T-cell (primary cell): ENCODE measurements at regions of chr12 and their contacts with region 1.

Region 1: DNA sequence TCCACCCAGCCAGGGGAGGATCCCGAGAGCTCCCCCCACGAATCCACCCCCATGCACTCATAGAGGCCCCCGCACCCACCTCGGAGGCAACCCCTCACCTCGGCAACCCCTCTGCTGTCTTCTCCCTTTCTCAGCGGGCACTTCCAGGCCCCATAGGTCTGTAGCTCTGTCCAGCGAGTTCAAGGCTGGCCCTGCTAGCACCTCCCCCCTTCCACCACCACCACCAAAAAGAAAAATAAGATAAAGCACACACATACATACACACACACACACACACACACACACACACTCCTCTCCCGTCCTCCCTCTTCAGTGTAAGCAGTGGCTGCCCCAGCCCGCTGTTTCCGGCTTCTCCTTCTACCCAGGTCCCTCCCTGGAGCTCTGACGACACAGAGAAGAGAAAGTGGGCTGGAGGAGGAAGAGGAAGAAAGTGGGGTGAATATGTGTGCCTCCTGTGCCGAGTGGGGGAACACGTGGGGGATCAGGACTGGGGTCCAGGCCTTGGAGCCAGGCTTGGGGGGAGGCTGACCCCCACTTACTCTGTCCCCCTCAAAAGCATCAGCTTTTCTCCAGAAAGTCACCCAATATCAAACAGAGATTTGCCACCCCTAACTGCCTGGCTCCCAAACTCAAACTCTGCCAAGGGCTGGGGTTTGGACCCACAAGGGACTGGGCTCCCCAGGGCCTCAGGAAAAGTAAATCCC is at the start of gene STAT6:
- DNase-seq: peak; percentile 55 to 93 (median 85)
- ATAC-seq: peak; percentile 71 to 76 (median 72)
- H3K4me3 ChIP-seq: peak within 1 kb of the TSS; percentile 68 to 97
- H3K4me3 Mint-ChIP-seq: peak within 1 kb of the TSS; percentile 89 to 98 (median 92)
- H3K27ac ChIP-seq: peak within 1 kb of the TSS; percentile 91
- H3K27ac Mint-ChIP-seq: peak within 1 kb of the TSS; percentile 96 to 97
- H3K4me1 ChIP-seq: peaks cover 17 to 52% of the 10 kb centered on the region in 2 experiments
- H3K4me1 Mint-ChIP-seq: peaks cover 44 to 59% (median 50%) of the 10 kb centered on the region in 3 donors
- H3K27me3 ChIP-seq: no peaks in the 10 kb centered on the region
- H3K27me3 Mint-ChIP-seq: peaks cover 0 to 1% of the 10 kb centered on the region in 2 donors
- total RNA-seq, gene STAT6: 227 to 348 (median 341) TPM

Region 2: GRCh38 chr12:56751712-56752598 is 359.2 kb before region 1 on chr12 and contains the start of gene PRIM1:
- CTCF ChIA-PET with region 1: interaction called, 6 to 11 read pairs
- POLR2A ChIA-PET with region 1: interaction called in 1 of 2 experiments, 4 read pairs
- DNase-seq: peak; percentile 52 to 87 (median 74)
- ATAC-seq: peak; percentile 87 to 90 (median 88)
- H3K4me3 ChIP-seq: peak within 1 kb of the TSS; percentile 91 to 92
- H3K4me3 Mint-ChIP-seq: peak within 1 kb of the TSS; percentile 95 to 96 (median 96)
- H3K27ac ChIP-seq: peak within 1 kb of the TSS; percentile 72
- H3K27ac Mint-ChIP-seq: peak within 1 kb of the TSS; percentile 89 to 95
- H3K4me1 ChIP-seq: peaks cover 11 to 16% of the 10 kb centered on the region in 2 experiments
- H3K4me1 Mint-ChIP-seq: peaks cover 32 to 38% (median 38%) of the 10 kb centered on the region in 3 donors
- H3K27me3 ChIP-seq: no peaks in the 10 kb centered on the region
- H3K27me3 Mint-ChIP-seq: no peaks in the 10 kb centered on the region
- total RNA-seq, gene PRIM1: 17.3 to 25.2 (median 22.2) TPM

Region 3: DNA sequence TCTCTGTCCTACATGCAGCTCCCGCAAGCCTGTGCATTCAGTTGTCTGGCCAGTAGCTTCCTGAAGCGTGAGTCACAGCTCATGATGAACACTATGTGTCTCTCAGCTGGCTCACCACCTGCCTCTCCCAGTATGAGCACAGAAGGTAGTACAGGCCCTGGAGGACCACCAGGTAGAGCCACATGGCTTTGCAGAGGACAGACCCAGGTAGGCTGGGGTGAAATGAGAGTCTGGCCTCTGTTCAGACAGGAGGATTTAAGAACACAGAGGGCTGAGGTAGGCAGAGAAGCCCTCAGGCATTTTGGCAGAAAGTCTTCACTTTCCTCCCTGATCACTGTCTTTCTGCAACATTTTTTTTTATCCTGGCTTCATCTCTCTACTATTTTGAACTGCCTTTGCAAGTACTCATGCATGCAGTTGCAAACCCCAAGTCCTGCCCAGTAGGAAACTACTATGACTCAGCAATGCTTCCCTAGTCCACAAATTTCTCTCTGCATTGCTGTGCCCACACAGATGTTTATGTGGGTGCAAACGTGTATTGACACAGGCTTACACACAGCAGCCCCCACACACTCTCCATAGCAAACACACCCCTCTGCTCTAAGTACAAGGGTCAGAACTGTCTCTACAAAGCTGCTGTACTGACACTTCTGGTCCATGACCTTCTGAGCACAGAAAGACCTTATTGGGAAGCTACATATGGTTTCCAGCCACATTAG is 169.7 kb before region 1 on chr12:
- CTCF ChIA-PET with region 1: no interaction called
- POLR2A ChIA-PET with region 1: no interaction called
- DNase-seq: no peak
- ATAC-seq: no peak
- H3K4me3 ChIP-seq: no peak overlapping the region
- H3K4me3 Mint-ChIP-seq: no peak overlapping the region
- H3K27ac ChIP-seq: no peak overlapping the region
- H3K27ac Mint-ChIP-seq: no peak overlapping the region
- H3K4me1 ChIP-seq: no peaks in the 10 kb centered on the region
- H3K4me1 Mint-ChIP-seq: no peaks in the 10 kb centered on the region
- H3K27me3 ChIP-seq: peaks cover 0 to 8% of the 10 kb centered on the region in 2 experiments
- H3K27me3 Mint-ChIP-seq: peaks cover 10 to 12% of the 10 kb centered on the region in 2 donors

Region 4: GRCh38 chr12:57005980-57006808 is 105.0 kb before region 1 on chr12 and contains the start of gene ZBTB39:
- CTCF ChIA-PET with region 1: interaction called, 6 to 22 read pairs
- POLR2A ChIA-PET with region 1: no interaction called
- DNase-seq: peak; percentile 16 to 85 (median 58)
- ATAC-seq: peak; percentile 81 to 89 (median 88)
- H3K4me3 ChIP-seq: peak within 1 kb of the TSS; percentile 60 to 70
- H3K4me3 Mint-ChIP-seq: peak within 1 kb of the TSS; percentile 92 to 95 (median 93)
- H3K27ac ChIP-seq: peak within 1 kb of the TSS; percentile 60
- H3K27ac Mint-ChIP-seq: peak within 1 kb of the TSS; percentile 95 to 96
- H3K4me1 ChIP-seq: peaks cover 33 to 48% of the 10 kb centered on the region in 2 experiments
- H3K4me1 Mint-ChIP-seq: peaks cover 63 to 86% (median 76%) of the 10 kb centered on the region in 3 donors
- H3K27me3 ChIP-seq: no peaks in the 10 kb centered on the region
- H3K27me3 Mint-ChIP-seq: no peaks in the 10 kb centered on the region
- total RNA-seq, gene ZBTB39: 7.9 to 11.2 (median 11.0) TPM

Region 5: DNA sequence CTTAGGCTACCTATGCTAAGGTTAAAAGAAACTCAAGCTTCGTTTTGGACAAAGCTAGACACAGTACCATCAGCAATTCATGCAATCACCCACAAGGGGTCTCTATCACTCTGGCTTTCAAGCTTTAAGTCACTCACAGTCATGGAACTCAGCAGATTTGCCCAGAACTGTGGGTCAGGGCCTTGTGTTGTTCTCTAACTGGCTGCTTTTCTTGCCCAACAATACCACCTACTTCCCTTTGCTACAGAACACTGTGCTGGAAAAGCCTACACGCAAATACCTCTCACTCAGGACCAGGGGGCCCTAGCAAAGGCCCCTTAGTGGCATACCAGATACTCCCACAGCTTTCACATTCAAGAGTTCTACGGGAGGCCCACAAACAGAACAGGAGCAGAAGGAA is 41.7 kb before region 1 on chr12:
- CTCF ChIA-PET with region 1: interaction called, 25 to 201 read pairs
- POLR2A ChIA-PET with region 1: interaction called, 5 to 9 read pairs
- DNase-seq: peak in 30 of 35 experiments; percentile 30 to 88 (median 55)
- ATAC-seq: peak; percentile 98 to 100 (median 99)
- H3K4me3 ChIP-seq: no peak overlapping the region
- H3K4me3 Mint-ChIP-seq: peak overlapping the region in 1 of 3 donors; percentile 6
- H3K27ac ChIP-seq: peak overlapping the region; percentile 54
- H3K27ac Mint-ChIP-seq: peak overlapping the region; percentile 85 to 92
- H3K4me1 ChIP-seq: peaks cover 5 to 12% of the 10 kb centered on the region in 2 experiments
- H3K4me1 Mint-ChIP-seq: peaks cover 17 to 31% (median 26%) of the 10 kb centered on the region in 3 donors
- H3K27me3 ChIP-seq: no peaks in the 10 kb centered on the region
- H3K27me3 Mint-ChIP-seq: no peaks in the 10 kb centered on the region

Region 6: DNA sequence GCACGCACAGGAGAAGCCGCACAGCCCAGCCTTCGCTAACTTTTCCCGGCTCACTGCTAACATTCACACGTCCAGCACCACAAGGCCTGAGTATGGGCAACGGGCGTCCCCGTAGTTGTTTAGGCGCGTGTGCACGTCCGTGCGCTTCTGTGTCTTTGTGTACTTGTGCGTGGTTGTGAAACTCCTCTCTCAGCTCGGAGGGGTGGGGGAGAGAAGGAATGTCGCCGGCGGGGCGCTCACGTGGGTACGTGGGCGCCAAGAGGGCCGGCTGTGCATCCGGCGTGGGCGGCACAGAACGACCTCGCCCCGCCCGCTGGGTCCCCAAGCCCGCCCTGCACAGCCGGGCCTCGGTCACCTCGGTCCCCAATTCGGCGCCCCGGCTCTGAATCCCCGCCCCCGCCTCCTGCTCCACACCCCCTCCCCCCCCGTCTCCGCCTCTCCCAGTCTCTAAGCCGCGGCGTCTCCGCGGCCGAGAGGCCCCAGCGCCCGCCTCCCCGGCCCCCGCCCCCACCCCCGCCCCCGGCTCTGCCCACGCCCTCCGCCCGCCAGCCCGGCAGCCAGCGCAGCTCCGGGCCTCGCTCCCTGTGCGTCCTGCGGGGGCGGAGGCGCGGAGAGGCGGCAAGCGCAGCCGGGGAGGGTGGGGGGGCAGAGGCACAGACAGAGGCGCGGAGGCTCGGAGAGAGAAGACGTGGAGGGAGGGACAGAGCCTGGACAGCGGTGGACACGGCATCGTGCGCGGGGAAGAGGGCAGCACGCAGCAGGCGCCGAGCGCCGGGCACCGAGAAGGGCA is 22.5 kb before region 1 on chr12 and contains the start of gene NAB2:
- CTCF ChIA-PET with region 1: interaction called, 4 to 15 read pairs
- POLR2A ChIA-PET with region 1: interaction called, 7 read pairs
- DNase-seq: peak; percentile 77 to 96 (median 88)
- ATAC-seq: peak; percentile 72 to 75 (median 74)
- H3K4me3 ChIP-seq: peak within 1 kb of the TSS; percentile 88 to 95
- H3K4me3 Mint-ChIP-seq: peak within 1 kb of the TSS; percentile 87 to 92 (median 89)
- H3K27ac ChIP-seq: peak within 1 kb of the TSS; percentile 95
- H3K27ac Mint-ChIP-seq: peak within 1 kb of the TSS; percentile 94 to 95
- H3K4me1 ChIP-seq: peaks cover 24 to 67% of the 10 kb centered on the region in 2 experiments
- H3K4me1 Mint-ChIP-seq: peaks cover 57 to 69% (median 64%) of the 10 kb centered on the region in 3 donors
- H3K27me3 ChIP-seq: no peaks in the 10 kb centered on the region
- H3K27me3 Mint-ChIP-seq: no peaks in the 10 kb centered on the region
- total RNA-seq, gene NAB2: 4.2 to 21.6 (median 16.9) TPM